ENCODE measurements at regions of chr5 and their contacts with region 1.

Region 1: DNA sequence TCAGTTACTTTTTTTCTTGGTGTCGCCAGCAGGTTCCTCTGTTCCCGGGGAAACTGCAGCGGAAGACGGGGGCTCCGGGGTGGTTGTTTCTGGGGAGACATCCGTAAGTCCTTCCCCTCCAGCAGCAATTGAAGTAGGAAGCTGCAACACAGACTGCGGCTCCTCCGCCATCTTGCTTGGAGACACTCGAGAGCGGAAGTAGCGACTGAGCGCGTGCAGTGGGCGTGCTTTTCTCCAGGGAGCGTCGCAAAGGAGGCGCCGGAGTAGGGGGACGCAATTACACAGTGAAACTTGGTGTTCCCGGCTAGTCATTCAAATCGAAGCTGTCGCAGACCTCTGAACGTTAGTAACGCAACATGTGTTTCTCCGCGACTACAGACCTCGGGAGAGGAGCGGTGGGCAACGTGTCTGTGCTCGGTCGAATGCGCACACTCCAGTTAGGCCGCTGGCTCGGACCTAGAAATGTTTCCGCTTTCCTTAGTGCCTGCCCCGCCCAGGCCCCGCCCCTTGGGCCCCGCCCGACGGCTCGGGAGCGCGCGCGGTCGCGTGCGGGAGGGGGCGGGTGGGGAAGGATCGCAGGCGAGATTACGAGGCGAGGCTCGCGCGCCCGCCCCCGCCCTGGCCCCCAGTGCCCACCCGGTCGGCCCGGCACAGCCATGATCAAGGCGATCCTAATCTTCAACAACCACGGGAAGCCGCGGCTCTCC is at the starts of genes AP3S1 and ATG12:
- DNase-seq: peak; percentile 93
- H3K4me3 Mint-ChIP-seq: peak within 1 kb of the TSS; percentile 96
- H3K27ac Mint-ChIP-seq: peak within 1 kb of the TSS; percentile 99
- H3K4me1 Mint-ChIP-seq: peaks cover 45% of the 10 kb centered on the region
- H3K27me3 Mint-ChIP-seq: no peaks in the 10 kb centered on the region
- total RNA-seq, gene AP3S1: 56.6 to 57.8 TPM
- total RNA-seq, gene ATG12: 39.1 to 41.3 TPM

Region 2: DNA sequence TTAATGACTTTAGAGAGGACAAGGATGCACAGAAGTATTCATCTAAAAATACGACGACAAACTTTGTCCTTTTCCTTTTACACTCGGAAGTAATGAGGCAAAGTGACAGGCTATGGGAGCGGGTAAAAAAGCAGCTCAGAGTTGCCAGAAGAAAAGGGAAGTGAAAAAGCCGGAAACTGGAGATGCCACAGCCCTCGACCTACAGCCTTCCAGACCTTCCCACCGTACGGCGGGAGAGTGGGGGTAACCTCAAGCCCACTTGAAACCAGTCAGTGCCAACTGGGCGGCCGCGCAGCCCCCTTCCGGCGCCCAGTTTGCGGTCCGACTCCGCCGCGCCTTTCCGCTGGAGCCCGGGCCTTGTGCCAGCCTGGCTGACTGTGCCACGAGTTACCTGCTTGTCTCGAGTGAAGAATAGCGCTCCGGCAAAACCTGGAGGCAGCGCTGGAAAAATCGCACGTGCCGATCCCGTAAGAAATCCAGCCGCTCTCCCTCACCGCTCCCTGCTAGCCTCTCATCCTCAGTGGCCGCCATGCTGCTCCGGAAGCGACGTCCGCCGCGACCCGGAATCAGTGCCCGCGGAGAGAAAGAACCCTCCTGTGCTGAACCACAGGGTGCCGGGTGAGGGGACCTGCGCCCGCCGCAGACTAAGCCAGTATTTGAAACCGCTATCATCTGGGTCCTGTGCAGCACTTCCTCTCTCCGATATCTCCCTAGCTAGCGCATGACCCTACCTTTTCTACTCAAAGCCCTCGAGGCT is 579.0 kb before region 1 on chr5 and contains the start of gene PGGT1B:
- CTCF ChIA-PET with region 1: no interaction called
- intact Hi-C with region 1: loop called (anchors 1 kb)
- DNase-seq: peak; percentile 82
- H3K4me3 Mint-ChIP-seq: peak within 1 kb of the TSS; percentile 92
- H3K27ac Mint-ChIP-seq: peak within 1 kb of the TSS; percentile 93
- H3K4me1 Mint-ChIP-seq: peaks cover 43% of the 10 kb centered on the region
- H3K27me3 Mint-ChIP-seq: no peaks in the 10 kb centered on the region
- total RNA-seq, gene PGGT1B: 35.8 to 37.4 TPM

Region 3: GRCh38 chr5:115309751-115310370 is 531.7 kb before region 1 on chr5:
- CTCF ChIA-PET with region 1: no interaction called
- intact Hi-C with region 1: loop called (anchors 1 kb)
- DNase-seq: no peak
- H3K4me3 Mint-ChIP-seq: no peak overlapping the region
- H3K27ac Mint-ChIP-seq: no peak overlapping the region
- H3K4me1 Mint-ChIP-seq: no peaks in the 10 kb centered on the region
- H3K27me3 Mint-ChIP-seq: peaks cover 22% of the 10 kb centered on the region

Region 4: GRCh38 chr5:115402822-115403577 is 438.5 kb before region 1 on chr5:
- CTCF ChIA-PET with region 1: no interaction called
- intact Hi-C with region 1: no loop called
- DNase-seq: no peak
- H3K4me3 Mint-ChIP-seq: no peak overlapping the region
- H3K27ac Mint-ChIP-seq: no peak overlapping the region
- H3K4me1 Mint-ChIP-seq: no peaks in the 10 kb centered on the region
- H3K27me3 Mint-ChIP-seq: peaks cover 13% of the 10 kb centered on the region

Region 5: DNA sequence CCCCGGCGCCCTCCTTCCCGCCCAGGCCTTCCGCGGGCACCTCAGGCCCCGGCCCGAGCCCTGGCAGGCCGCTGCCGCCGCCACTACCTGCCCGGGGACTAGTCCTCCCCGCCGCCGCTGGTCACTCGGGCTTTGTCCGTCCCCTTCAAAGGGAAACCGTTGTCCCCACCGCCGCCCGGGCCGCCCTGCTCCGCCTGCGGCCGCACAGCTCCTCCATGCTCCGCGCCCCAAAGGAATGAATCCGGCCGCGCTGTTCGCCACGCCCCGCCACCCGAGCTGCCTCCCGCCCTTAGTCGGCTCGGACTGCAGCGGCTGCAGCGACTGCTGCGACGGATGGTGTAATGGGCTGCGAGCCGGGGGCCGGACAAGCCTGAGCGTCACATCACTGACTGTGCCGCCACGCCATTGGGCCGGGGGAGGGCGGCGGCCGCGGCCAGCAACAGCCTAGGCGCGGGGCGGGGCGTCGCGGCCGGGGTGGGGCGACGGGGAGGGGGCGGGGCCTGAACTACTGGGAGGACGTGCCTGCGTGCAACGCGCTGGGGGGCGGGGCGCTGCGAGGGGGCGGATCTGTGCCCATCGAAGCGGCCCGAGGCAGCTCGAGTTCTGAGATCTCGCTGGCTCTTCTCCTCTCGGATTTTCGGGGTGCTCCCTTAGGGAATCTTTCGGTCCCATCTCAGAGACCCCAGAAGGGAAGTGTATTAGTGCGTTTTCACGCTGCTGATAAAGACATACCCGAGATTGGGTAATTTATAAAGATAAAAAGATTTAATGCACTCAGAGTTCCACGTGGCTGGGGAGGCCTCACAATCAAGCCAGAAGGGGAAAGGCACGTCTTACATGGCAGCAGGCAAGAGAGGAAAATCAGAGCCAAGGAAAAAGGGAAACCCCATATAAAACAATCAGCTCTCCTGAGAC is 296.8 kb before region 1 on chr5 and contains the start of gene FEM1C:
- CTCF ChIA-PET with region 1: interaction called, 4 read pairs
- intact Hi-C with region 1: loop called (anchors 1 kb)
- DNase-seq: peak; percentile 98
- H3K4me3 Mint-ChIP-seq: peak within 1 kb of the TSS; percentile 95
- H3K27ac Mint-ChIP-seq: peak within 1 kb of the TSS; percentile 99
- H3K4me1 Mint-ChIP-seq: peaks cover 40% of the 10 kb centered on the region
- H3K27me3 Mint-ChIP-seq: no peaks in the 10 kb centered on the region
- total RNA-seq, gene FEM1C: 9.7 to 10.0 TPM

Region 6: GRCh38 chr5:115625579-115626444 is 215.7 kb before region 1 on chr5 and contains the start of gene TMED7:
- CTCF ChIA-PET with region 1: interaction called, 8 read pairs
- intact Hi-C with region 1: loop called (anchors 1 kb)
- DNase-seq: peak; percentile 100
- H3K4me3 Mint-ChIP-seq: no peak within 1 kb of the TSS
- H3K27ac Mint-ChIP-seq: peak within 1 kb of the TSS; percentile 89
- H3K4me1 Mint-ChIP-seq: peaks cover 21% of the 10 kb centered on the region
- H3K27me3 Mint-ChIP-seq: no peaks in the 10 kb centered on the region
- total RNA-seq, gene TMED7: 34.6 to 35.4 TPM

Region 7: DNA sequence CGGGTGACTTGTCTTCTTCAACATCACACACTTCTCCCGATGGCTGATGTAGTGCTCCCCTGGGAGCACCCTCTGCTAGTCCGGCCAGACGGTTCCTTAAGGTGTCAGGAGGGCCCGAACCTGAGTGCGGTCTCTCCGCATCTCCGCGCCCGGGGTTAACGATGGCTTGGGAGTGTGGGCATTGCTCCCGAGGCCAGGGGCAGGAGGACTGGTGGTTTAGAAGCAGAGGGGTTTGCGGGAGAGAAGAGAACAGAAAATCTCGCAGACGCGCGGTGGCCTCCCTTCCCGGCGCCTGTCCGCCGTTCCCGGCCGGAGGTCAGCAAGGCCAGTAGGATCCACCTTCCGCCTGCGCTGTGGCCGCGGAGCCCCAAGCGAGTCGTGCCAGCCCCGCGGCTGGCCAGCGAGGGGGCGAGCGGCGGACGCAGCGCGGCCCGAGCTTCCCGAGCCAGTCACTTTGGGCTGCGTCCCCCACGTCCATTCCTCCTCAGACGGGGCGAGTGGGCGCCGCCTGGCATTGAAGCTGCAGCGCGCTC is 25.8 kb before region 1 on chr5:
- CTCF ChIA-PET with region 1: no interaction called
- intact Hi-C with region 1: loop called (anchors 1 kb)
- DNase-seq: no peak
- H3K4me3 Mint-ChIP-seq: peak overlapping the region; percentile 61
- H3K27ac Mint-ChIP-seq: no peak overlapping the region
- H3K4me1 Mint-ChIP-seq: peaks cover 13% of the 10 kb centered on the region
- H3K27me3 Mint-ChIP-seq: peaks cover 70% of the 10 kb centered on the region

Region 8: DNA sequence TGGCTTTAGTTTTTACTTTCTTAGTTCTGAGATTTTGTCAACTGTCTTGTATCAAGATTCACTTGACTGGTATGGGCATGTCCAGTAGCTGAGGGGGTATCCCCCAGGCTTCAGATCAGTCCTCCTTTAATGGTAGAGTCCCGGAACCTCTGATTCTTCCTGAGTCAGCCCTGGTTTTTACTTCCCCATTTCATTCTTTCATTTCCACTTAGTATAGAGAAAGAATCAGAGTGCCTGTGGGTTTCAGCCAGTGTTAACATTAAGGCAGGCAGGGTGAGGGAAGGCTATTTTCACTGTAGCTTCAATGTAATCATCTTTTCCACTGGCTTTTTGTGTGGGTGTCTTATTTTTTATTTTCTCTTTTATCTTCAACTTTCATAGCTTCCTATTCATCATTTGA is 235.0 kb after region 1 on chr5:
- CTCF ChIA-PET with region 1: no interaction called
- intact Hi-C with region 1: loop called (anchors 2 kb)
- DNase-seq: peak; percentile 41
- H3K4me3 Mint-ChIP-seq: no peak overlapping the region
- H3K27ac Mint-ChIP-seq: peak overlapping the region; percentile 17
- H3K4me1 Mint-ChIP-seq: peaks cover 25% of the 10 kb centered on the region
- H3K27me3 Mint-ChIP-seq: peaks cover 3% of the 10 kb centered on the region

Measured in activated naive CD4-positive, alpha-beta T cell treated with anti-CD3 and anti-CD28 coated beads for 36 hours (primary cell).